HEK293 (cell line): ENCODE measurements at regions of chr22 and their contacts with region 1.

Region 1: DNA sequence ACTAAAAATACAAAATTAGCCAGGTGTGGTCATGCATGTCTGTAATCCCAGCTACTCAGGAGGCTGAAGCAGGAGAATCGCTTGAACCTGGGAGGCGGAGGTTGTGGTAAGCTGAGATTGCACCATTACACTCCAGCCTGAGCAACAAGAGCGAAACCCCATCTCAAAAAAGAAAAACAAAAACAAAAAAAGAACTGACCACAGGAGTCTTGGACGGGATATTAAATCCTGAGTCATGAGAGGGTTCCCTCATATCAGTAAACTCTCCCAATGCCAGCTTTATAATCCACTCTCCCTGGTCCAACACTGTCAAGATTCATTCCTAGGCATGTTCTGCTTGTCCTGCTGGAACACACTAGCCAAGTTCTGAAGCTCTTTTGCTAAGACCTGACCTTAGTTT is 61.5 kb upstream of the EP300 start:
- H3K4me3 ChIP-seq: no peak overlapping the region
- H3K27ac ChIP-seq: no peak overlapping the region
- H3K4me1 ChIP-seq: no peaks in the 10 kb centered on the region
- CTCF ChIP-seq: no peak

Region 2: DNA sequence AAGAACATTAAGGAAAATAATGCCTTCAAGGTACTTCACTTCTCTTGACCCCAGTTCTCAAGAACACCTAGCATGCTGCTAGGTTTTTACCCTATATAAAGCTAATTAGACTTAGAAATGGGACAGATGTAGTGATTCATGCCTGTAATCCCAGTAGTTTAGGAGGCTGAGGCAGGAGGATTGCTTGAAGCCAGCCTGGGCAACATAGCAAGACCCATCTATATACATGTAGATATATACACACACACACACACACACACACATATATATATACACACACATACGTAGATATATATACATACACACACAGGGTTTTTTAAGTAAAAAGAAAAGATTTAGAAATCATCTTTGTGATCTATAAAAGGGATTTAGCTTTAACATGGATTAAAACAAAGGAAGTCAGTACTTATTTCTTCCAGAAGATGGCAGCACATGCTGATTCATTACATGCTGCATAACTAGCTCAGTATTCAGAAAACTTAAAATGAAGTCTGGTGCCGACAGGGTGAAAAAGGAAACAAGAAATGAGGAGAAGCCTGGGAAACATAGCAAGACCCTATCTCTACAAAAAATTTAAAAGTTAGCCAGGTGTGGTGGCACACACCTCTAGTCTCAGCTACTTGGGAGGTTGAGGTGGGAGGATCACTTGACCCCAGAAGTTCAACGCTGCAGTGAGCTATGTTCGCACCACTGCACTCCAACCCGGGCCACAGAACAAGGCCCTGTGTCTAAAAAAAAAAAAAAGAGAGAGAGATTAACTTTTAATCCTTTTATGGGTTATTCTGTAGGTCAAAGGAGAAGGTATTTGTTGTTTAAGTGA is 108.2 kb before region 1 on chr22:
- CTCF ChIA-PET with region 1: no interaction called
- POLR2A ChIA-PET with region 1: no interaction called
- H3K4me3 ChIP-seq: no peak overlapping the region
- H3K27ac ChIP-seq: no peak overlapping the region
- H3K4me1 ChIP-seq: no peaks in the 10 kb centered on the region
- CTCF ChIP-seq: 0 out of 2 replicates have a peak, but pooled peaks have one; percentile 49

Region 3: GRCh38 chr22:41041532-41041931 is 10.6 kb after region 1 on chr22:
- CTCF ChIA-PET with region 1: no interaction called
- POLR2A ChIA-PET with region 1: no interaction called
- H3K4me3 ChIP-seq: no peak overlapping the region
- H3K27ac ChIP-seq: no peak overlapping the region
- H3K4me1 ChIP-seq: no peaks in the 10 kb centered on the region
- CTCF ChIP-seq: no peak

Region 4: GRCh38 chr22:41411021-41411851 is 380.3 kb after region 1 on chr22:
- CTCF ChIA-PET with region 1: no interaction called
- POLR2A ChIA-PET with region 1: interaction called, 11 read pairs
- H3K4me3 ChIP-seq: no peak overlapping the region
- H3K27ac ChIP-seq: peak overlapping the region; percentile 21; the same call in 1 of the 2 replicates
- H3K4me1 ChIP-seq: peaks cover 6% of the 10 kb centered on the region; the same call in 1 of the 2 replicates
- CTCF ChIP-seq: no peak